Psoas muscle (tissue), 8 donors: ENCODE measurements at regions of chr2 and their contacts with region 1.

Region 1: DNA sequence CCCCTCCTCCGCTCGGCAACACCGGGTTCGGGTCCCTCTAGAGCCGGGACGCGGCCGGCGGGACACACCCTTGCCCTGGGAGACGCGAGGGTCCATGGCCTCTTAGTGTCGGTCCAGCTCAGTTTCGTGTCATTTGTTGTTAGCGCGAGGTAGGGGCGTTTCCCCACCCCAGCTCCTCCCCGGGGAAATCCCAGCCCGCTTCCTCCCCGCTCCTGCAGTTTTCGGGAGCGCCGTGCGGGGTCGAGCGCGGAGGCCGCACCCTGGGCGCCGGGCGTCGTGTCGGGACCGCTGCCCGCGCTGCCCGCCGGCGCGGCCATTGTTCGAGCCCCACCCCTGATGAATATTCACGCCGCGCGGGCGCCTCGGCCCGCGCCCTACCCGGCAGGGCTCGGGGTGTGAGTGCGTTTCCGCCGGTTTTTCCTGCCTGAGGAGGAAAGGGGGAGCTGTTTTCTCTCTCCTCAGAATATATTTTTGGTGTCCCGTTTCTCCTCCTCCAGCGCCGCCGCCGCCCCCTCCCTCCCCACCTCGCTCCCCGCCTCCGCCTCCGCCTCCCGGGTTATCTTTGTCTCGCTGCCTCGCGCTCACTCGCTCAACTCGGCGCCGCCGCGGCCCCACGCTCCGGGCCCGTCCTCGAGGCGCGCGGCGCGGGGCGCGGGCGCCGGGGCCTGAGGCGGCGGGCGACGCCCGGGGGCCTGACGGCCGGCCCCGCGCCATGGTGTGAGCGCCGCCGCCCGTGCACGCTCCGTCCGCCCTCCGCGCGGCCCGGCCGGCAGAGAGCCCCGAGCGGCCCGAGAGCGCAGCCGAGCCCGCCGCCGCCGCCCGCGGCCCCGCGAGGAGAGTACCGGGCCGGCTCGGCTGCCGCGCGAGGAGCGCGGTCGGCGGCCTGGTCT is at the start of gene MAP4K4:
- DNase-seq: peak; percentile 82 to 91
- ATAC-seq: peak; percentile 80 to 90 (median 82)
- H3K4me3 ChIP-seq: peak within 1 kb of the TSS; percentile 82
- H3K27ac ChIP-seq: peak within 1 kb of the TSS; percentile 90
- H3K4me1 ChIP-seq: peaks cover 29% of the 10 kb centered on the region
- H3K27me3 ChIP-seq: no peaks in the 10 kb centered on the region
- CTCF ChIP-seq: no peak
- total RNA-seq, gene MAP4K4: 45.5 to 89.5 (median 80.7) TPM

Region 2: GRCh38 chr2:101518578-101519492 is 178.5 kb before region 1 on chr2:
- intact Hi-C with region 1: loop called in 1 of 2 experiments (anchors 5 kb)
- DNase-seq: peak in 1 of 2 donors; percentile 33
- ATAC-seq: peak; percentile 76 to 94 (median 82)
- H3K4me3 ChIP-seq: peak overlapping the region; percentile 12
- H3K27ac ChIP-seq: no peak overlapping the region
- H3K4me1 ChIP-seq: no peaks in the 10 kb centered on the region
- H3K27me3 ChIP-seq: no peaks in the 10 kb centered on the region
- CTCF ChIP-seq: peak; percentile 40

Region 3: GRCh38 chr2:101736861-101737291 is 39.5 kb after region 1 on chr2:
- intact Hi-C with region 1: loop called in 1 of 2 experiments (anchors 5 kb)
- DNase-seq: no peak
- ATAC-seq: peak in 3 of 4 donors; percentile 33 to 44 (median 36)
- H3K4me3 ChIP-seq: no peak overlapping the region
- H3K27ac ChIP-seq: peak overlapping the region; percentile 85
- H3K4me1 ChIP-seq: peaks cover 86% of the 10 kb centered on the region
- H3K27me3 ChIP-seq: no peaks in the 10 kb centered on the region
- CTCF ChIP-seq: no peak

Region 4: DNA sequence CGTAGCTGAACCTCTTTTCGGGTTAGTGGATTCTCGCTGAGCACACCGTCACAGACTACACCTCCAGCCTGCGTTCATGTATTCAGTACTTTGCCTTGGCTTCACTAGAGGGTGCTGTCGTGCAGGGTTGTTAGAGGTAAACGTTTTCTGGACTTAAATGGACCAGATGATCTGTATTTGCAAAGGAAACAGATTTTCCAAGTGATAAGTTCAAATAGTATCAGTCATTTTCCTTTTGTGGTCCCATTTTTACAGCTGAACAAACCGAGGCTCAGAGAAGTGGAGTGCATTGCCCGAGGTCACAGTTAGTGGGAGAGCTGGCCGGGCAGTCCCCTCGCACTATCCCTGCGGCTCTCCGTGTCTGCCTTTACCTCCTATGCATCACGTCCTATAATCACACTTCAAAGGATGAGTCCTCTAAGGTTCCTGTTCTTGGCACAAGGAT is 126.0 kb after region 1 on chr2:
- intact Hi-C with region 1: loop called in 1 of 2 experiments (anchors 5 kb)
- DNase-seq: peak in 1 of 2 donors; percentile 29
- ATAC-seq: peak; percentile 58 to 83 (median 68)
- H3K4me3 ChIP-seq: no peak overlapping the region
- H3K27ac ChIP-seq: no peak overlapping the region
- H3K4me1 ChIP-seq: peaks cover 20% of the 10 kb centered on the region
- H3K27me3 ChIP-seq: no peaks in the 10 kb centered on the region
- CTCF ChIP-seq: peak; percentile 59